Gastrocnemius medialis (tissue), 4 donors: ENCODE measurements at regions of chr10 and their contacts with region 1.

Region 1: GRCh38 chr10:31031558-31032257 is at the start of gene ZNF438:
- DNase-seq: peak; percentile 90 to 95
- ATAC-seq: peak; percentile 75 to 79
- H3K4me3 ChIP-seq: peak within 1 kb of the TSS; percentile 72 to 87 (median 75)
- H3K27ac ChIP-seq: peak within 1 kb of the TSS; percentile 99 to 100 (median 100)
- H3K4me1 ChIP-seq: peaks cover 28 to 61% of the 10 kb centered on the region in 2 donors
- H3K27me3 ChIP-seq: no peaks in the 10 kb centered on the region
- CTCF ChIP-seq: peak; percentile 67 to 76 (median 72)
- POLR2A ChIP-seq: peak; percentile 95
- total RNA-seq, gene ZNF438: 14.4 to 37.0 (median 26.5) TPM

Region 2: GRCh38 chr10:30840406-30841050 is 191.2 kb before region 1 on chr10:
- in situ Hi-C with region 1: no loop called
- intact Hi-C with region 1: loop called (anchors 5 kb)
- DNase-seq: peak in 1 of 2 donors; percentile 67
- ATAC-seq: peak; percentile 70 to 71
- H3K4me3 ChIP-seq: peak overlapping the region in 1 of 4 donors; percentile 29
- H3K27ac ChIP-seq: peak overlapping the region; percentile 42 to 69 (median 56)
- H3K4me1 ChIP-seq: peaks cover 36 to 40% of the 10 kb centered on the region in 2 donors
- H3K27me3 ChIP-seq: no peaks in the 10 kb centered on the region
- CTCF ChIP-seq: no peak
- POLR2A ChIP-seq: no peak

Region 3: GRCh38 chr10:30970760-30971460 is 60.8 kb before region 1 on chr10:
- in situ Hi-C with region 1: no loop called
- intact Hi-C with region 1: loop called (anchors 1 kb)
- DNase-seq: peak in 1 of 2 donors; percentile 63
- ATAC-seq: peak; percentile 16 to 47
- H3K4me3 ChIP-seq: peak overlapping the region in 2 of 4 donors; percentile 10 to 17
- H3K27ac ChIP-seq: peak overlapping the region; percentile 84 to 93 (median 89)
- H3K4me1 ChIP-seq: peaks cover 52 to 54% of the 10 kb centered on the region in 2 donors
- H3K27me3 ChIP-seq: no peaks in the 10 kb centered on the region
- CTCF ChIP-seq: no peak
- POLR2A ChIP-seq: no peak

Region 4: DNA sequence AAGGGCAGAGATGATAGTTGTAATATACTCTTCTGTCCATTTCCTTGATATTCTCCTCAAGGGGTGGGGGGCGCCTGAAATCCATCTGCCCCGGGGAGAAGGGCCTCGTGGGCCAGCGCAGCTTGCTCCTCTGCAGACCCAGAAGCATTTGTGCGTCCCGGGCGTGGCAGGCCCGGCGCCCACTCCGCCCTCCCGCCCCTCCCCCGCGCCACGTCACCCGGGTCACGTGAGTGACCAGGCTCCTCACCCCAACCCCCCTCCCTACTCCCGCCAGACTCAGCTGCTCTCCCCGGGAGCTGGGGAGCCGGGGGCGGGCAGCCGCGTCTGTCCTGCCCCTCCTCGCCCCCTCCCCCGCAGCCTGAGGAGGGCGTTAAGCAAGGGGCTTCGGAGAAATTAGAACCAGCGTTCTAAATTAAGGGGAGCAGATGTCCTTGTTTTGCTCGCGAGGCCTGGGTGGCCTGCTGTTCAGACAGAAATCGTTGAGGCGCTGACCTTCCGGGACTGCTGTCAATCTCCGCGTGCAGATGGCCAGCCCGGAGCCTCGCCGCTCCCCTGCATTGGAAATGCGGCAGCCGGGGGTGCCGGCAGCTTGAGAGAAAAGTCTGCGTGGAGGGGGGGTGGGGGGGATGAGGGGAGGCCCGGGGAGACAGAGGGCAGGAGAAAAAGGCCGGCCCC is 102.1 kb after region 1 on chr10:
- in situ Hi-C with region 1: no loop called
- intact Hi-C with region 1: loop called (anchors 5 kb)
- DNase-seq: peak; percentile 58 to 76
- ATAC-seq: peak; percentile 82 to 88
- H3K4me3 ChIP-seq: peak overlapping the region; percentile 63 to 94 (median 68)
- H3K27ac ChIP-seq: peak overlapping the region; percentile 90 to 94 (median 93)
- H3K4me1 ChIP-seq: peaks cover 4 to 13% of the 10 kb centered on the region in 2 donors
- H3K27me3 ChIP-seq: no peaks in the 10 kb centered on the region
- CTCF ChIP-seq: no peak
- POLR2A ChIP-seq: peak; percentile 74

Region 5: GRCh38 chr10:31603235-31604087 is 571.8 kb after region 1 on chr10:
- in situ Hi-C with region 1: no loop called
- intact Hi-C with region 1: loop called (anchors 2 kb)
- DNase-seq: peak; percentile 95 to 97
- ATAC-seq: peak; percentile 75
- H3K4me3 ChIP-seq: peak overlapping the region; percentile 68 to 97 (median 76)
- H3K27ac ChIP-seq: peak overlapping the region; percentile 92 to 99 (median 96)
- H3K4me1 ChIP-seq: peaks cover 14 to 19% of the 10 kb centered on the region in 2 donors
- H3K27me3 ChIP-seq: no peaks in the 10 kb centered on the region
- CTCF ChIP-seq: peak in 3 of 5 experiments; percentile 13 to 34 (median 23)
- POLR2A ChIP-seq: peak; percentile 85 to 86

Region 6: GRCh38 chr10:31928549-31929260 is 897.0 kb after region 1 on chr10 and contains the start of gene ARHGAP12:
- in situ Hi-C with region 1: no loop called
- intact Hi-C with region 1: loop called (anchors 10 kb)
- DNase-seq: peak; percentile 82 to 92
- ATAC-seq: peak; percentile 88 to 91
- H3K4me3 ChIP-seq: peak within 1 kb of the TSS; percentile 88 to 98 (median 90)
- H3K27ac ChIP-seq: peak within 1 kb of the TSS; percentile 98
- H3K4me1 ChIP-seq: peaks cover 25 to 33% of the 10 kb centered on the region in 2 donors
- H3K27me3 ChIP-seq: no peaks in the 10 kb centered on the region
- CTCF ChIP-seq: peak in 1 of 5 experiments; percentile 12
- POLR2A ChIP-seq: peak; percentile 97 to 99
- total RNA-seq, gene ARHGAP12: 17.0 to 34.3 (median 21.6) TPM